K562 (cell line): ENCODE measurements at regions of chr10 and their contacts with region 1.

Region 1: DNA sequence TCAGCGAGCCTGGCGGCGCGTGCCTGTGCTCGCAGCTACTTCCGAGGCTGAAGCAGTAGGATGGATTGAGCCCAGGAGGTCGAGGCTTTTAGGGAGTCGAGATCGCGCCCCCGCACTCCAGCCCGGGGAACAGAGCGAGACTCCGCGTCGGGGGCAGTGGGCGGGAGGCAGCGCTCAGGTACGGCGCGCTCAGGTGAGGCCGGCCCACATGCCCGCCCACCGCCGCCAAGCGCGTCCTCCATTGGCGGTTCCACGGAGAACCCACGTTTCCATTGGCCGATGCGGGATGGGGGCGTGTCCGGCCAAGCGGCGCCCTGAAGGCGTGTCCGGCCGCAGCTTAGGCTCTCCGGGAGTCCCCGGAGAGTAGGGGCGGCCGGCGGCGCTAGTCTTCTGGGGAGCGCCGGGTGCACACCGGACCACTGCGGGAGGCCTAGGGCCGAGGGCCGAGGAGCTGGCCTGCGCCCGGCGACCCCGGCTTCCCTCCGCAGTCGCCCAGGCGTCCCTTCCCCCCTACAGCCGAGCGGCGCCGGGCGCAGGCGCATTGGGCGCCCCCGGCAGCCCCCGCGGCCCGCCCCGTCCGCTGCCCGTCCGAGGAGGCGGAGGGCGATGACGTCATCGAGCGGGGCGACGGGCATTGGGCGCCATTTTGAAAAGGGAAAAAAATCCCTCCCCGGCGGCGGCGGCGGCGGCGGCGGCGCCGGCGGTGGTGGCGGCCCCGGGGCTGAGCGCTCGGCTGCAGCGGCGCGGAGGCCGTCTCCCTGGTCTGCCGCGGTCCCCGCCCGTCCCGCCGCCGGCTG is at the start of gene PPP2R2D:
- DNase-seq: peak; percentile 84 to 92 (median 88)
- ATAC-seq: peak; percentile 86
- H3K4me3 ChIP-seq: peak within 1 kb of the TSS; percentile 81
- H3K27ac ChIP-seq: peak within 1 kb of the TSS; percentile 90
- H3K4me1 ChIP-seq: peaks cover 42 to 46% of the 10 kb centered on the region in 2 experiments
- H3K27me3 ChIP-seq: no peaks in the 10 kb centered on the region
- CTCF ChIP-seq: no peak
- EP300 ChIP-seq: no peak
- POLR2A ChIP-seq: peak; percentile 76
- RAD21 ChIP-seq: no peak
- polyA plus RNA-seq, gene PPP2R2D: 1.9 to 5.1 TPM

Region 2: GRCh38 chr10:131915990-131916766 is 15.6 kb after region 1 on chr10:
- CTCF ChIA-PET with region 1: no interaction called
- POLR2A ChIA-PET with region 1: interaction called, 100 read pairs
- in situ Hi-C with region 1: no loop called
- intact Hi-C with region 1: no loop called
- DNase-seq: peak in 2 of 4 experiments; percentile 39 to 82
- ATAC-seq: peak; percentile 79
- H3K4me3 ChIP-seq: no peak overlapping the region
- H3K27ac ChIP-seq: peak overlapping the region; percentile 96
- H3K4me1 ChIP-seq: peaks cover 6 to 46% of the 10 kb centered on the region in 2 experiments
- H3K27me3 ChIP-seq: no peaks in the 10 kb centered on the region
- CTCF ChIP-seq: no peak
- EP300 ChIP-seq: peak; percentile 38
- POLR2A ChIP-seq: peak; percentile 51; the same call in 1 of the 2 replicates
- RAD21 ChIP-seq: no peak

Region 3: GRCh38 chr10:131928248-131929095 is 27.9 kb after region 1 on chr10:
- CTCF ChIA-PET with region 1: no interaction called
- POLR2A ChIA-PET with region 1: interaction called, 14 read pairs
- in situ Hi-C with region 1: no loop called
- intact Hi-C with region 1: no loop called
- DNase-seq: peak in 2 of 4 experiments; percentile 37 to 42
- ATAC-seq: peak; percentile 69
- H3K4me3 ChIP-seq: no peak overlapping the region
- H3K27ac ChIP-seq: peak overlapping the region; percentile 60; the same call in 2 of the 3 replicates
- H3K4me1 ChIP-seq: peaks cover 36 to 55% of the 10 kb centered on the region in 2 experiments; a peak in 4 of 5 replicates
- H3K27me3 ChIP-seq: no peaks in the 10 kb centered on the region; a peak in 1 of 5 replicates
- CTCF ChIP-seq: no peak
- EP300 ChIP-seq: no peak
- POLR2A ChIP-seq: no peak
- RAD21 ChIP-seq: no peak

Region 4: DNA sequence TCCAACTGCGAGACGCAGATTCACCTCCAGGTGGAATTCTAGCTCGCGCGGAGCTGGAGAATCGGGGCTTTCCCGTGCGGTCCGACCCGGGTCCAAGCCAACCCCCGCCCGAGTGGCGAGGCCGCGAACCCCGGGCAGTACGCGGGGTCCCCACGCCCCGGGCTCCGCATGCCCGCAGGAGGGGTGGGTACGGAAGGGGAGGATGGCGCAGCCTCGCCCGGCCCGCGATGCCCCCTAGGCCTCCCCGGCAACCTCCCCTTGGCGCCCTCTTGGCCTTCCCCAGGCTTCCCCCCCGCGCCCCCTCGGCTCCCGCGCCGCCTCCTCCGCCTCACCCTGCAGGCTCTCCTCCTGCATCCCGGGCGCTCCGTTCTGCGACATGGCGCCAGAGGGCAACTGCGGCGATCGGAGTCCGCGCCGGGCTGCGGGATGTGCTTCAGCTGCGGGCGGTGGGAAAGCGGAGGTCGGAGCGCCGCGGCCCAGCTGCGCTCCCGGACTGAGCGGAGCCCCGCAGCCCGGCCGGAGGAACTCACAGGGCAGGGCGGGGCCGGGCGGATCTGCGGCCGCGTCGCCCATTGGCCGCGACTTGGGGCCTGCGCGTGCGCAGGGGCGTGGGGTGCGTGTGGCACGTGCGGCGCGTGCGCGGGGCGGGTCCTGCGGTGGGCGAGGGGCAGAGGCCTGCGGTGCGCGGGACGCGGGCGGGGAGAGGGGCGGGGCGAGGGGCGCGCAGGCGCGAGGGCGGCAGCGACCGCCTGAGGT is 81.1 kb after region 1 on chr10 and contains the start of gene BNIP3:
- CTCF ChIA-PET with region 1: no interaction called
- POLR2A ChIA-PET with region 1: no interaction called
- in situ Hi-C with region 1: no loop called
- intact Hi-C with region 1: loop called (anchors 10 kb)
- DNase-seq: peak; percentile 94 to 97 (median 97)
- ATAC-seq: peak; percentile 95
- H3K4me3 ChIP-seq: peak within 1 kb of the TSS; percentile 68
- H3K27ac ChIP-seq: peak within 1 kb of the TSS; percentile 79
- H3K4me1 ChIP-seq: peaks cover 30 to 35% of the 10 kb centered on the region in 2 experiments; a peak in 4 of 5 replicates
- H3K27me3 ChIP-seq: no peaks in the 10 kb centered on the region
- CTCF ChIP-seq: 0 out of 6 replicates have a peak, but pooled peaks of 1 of the 3 experiments have one; percentile 4
- EP300 ChIP-seq: no peak
- POLR2A ChIP-seq: peak; percentile 69
- RAD21 ChIP-seq: no peak
- polyA plus RNA-seq, gene BNIP3: 9.2 to 10.7 TPM

Region 5: DNA sequence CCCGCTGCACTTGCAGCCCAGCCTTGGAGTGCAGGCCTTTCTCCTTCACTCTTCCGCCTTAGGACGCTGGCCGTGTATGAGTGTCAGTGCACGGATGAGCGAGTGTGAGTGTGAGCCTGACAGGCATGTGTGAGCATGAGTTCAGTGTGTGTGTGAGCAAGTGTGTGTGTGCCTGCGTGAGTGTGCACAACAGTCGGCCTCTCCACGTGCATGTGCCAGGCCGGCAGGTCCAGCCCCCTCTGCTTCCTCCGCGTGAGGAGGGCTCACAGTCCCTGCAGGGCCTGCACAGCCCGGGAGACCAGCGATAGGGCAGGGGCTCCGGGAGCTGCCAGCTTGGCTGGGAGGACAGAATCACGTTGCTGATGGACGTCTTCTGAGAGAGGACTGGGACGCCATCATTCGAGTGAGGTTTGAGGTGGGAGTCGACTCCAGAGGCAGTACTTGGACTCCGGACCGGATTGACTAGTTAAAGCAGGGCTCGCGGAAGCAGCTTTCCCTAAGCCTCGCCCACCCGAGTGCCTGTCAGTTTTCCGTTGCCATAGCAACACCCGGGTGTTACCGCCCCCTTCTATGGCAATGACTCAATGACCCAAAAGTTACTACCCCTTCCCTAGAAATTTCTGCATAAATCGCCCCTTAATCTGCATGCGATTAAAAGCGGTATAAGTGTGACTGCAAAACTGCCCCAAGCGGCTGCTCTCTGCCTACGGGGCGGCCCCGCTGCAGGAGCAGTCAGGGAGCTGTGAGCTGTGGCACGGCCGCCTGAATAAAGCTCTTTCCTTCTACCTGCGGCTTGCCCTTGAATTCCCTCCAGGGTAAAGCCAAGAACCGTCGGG is 1061.5 kb after region 1 on chr10:
- CTCF ChIA-PET with region 1: no interaction called
- POLR2A ChIA-PET with region 1: no interaction called
- in situ Hi-C with region 1: no loop called
- intact Hi-C with region 1: no loop called
- DNase-seq: peak in 2 of 4 experiments; percentile 6 to 14
- ATAC-seq: peak; percentile 49; the same call in 1 of the 3 replicates
- H3K4me3 ChIP-seq: no peak overlapping the region
- H3K27ac ChIP-seq: no peak overlapping the region
- H3K4me1 ChIP-seq: peaks cover 0 to 8% of the 10 kb centered on the region in 2 experiments; a peak in 2 of 5 replicates
- H3K27me3 ChIP-seq: peaks cover 0 to 64% of the 10 kb centered on the region in 2 experiments; a peak in 3 of 5 replicates
- CTCF ChIP-seq: no peak
- EP300 ChIP-seq: no peak
- POLR2A ChIP-seq: no peak
- RAD21 ChIP-seq: no peak